PC-3 (cell line): ENCODE measurements at regions of chr11 and their contacts with region 1.

Region 1: GRCh38 chr11:88535916-88536547 is 198.5 kb upstream of the CTSC start:
- DNase-seq: peak; percentile 94
- ATAC-seq: peak; percentile 93
- H3K4me3 ChIP-seq: 0 out of 2 replicates have a peak overlapping the region, but pooled peaks have one; percentile 5
- H3K27ac ChIP-seq: peak overlapping the region; percentile 87
- H3K4me1 ChIP-seq: peaks cover 48% of the 10 kb centered on the region
- H3K27me3 ChIP-seq: no peaks in the 10 kb centered on the region
- CTCF ChIP-seq: no peak

Region 2: GRCh38 chr11:87722756-87723565 is 813.1 kb before region 1 on chr11:
- CTCF ChIA-PET with region 1: interaction called, 12 read pairs
- POLR2A ChIA-PET with region 1: no interaction called
- intact Hi-C with region 1: no loop called
- DNase-seq: peak; percentile 64
- ATAC-seq: peak; percentile 72
- H3K4me3 ChIP-seq: 0 out of 2 replicates have a peak overlapping the region, but pooled peaks have one; percentile 8
- H3K27ac ChIP-seq: no peak overlapping the region
- H3K4me1 ChIP-seq: peaks cover 11% of the 10 kb centered on the region
- H3K27me3 ChIP-seq: no peaks in the 10 kb centered on the region
- CTCF ChIP-seq: peak; percentile 94

Region 3: DNA sequence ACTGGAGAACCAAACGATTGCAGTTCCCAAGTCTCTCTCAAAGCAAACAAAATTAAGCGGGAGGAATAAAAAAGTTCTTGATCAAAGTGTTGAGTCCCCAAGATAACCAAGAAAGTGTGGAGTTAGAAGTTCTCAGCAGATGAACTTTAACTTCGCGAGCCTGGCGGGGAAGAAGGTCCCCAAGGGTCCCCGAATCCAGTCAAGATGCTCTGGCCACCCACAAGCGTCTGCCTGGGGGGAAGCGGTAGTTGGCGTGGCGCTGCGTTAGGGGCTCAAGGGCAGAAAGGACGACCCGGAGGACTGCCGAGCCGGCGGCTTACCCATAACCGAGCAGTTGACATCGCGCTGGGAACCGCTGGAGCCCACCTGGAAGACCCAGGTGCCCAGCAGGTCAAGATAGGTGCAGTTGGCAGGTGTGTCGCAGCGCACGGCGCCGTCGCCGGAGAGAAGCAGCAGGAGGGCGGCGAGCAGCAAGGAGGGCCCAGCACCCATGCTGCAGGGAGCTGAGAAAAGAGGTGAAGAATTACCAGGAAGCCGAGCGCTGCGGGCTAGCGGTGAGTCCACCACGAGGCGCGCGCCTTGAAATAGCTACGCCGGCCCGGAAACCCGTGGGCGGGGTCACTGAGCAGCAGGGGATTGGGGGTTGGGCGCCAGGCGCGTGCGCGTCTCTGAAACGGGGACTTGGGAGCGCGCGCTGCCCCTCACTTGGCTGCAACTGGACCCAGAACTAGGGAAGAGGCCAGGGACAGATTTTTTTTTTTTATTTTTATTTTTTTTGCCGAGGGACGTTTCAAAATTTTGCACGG is 198.6 kb before region 1 on chr11 and contains the start of gene CTSC:
- CTCF ChIA-PET with region 1: interaction called, 3 read pairs
- POLR2A ChIA-PET with region 1: no interaction called
- intact Hi-C with region 1: loop called (anchors 1 kb)
- DNase-seq: peak; percentile 96
- ATAC-seq: peak; percentile 85
- H3K4me3 ChIP-seq: peak within 1 kb of the TSS; percentile 98
- H3K27ac ChIP-seq: peak within 1 kb of the TSS; percentile 78
- H3K4me1 ChIP-seq: peaks cover 48% of the 10 kb centered on the region
- H3K27me3 ChIP-seq: no peaks in the 10 kb centered on the region
- CTCF ChIP-seq: no peak
- total RNA-seq, gene CTSC: 200 and 240 TPM in 2 replicates

Region 4: GRCh38 chr11:88357323-88358039 is 178.6 kb before region 1 on chr11:
- CTCF ChIA-PET with region 1: no interaction called
- POLR2A ChIA-PET with region 1: no interaction called
- intact Hi-C with region 1: loop called (anchors 1 kb)
- DNase-seq: peak; percentile 87
- ATAC-seq: peak; percentile 96
- H3K4me3 ChIP-seq: peak overlapping the region; percentile 15; the same call in 1 of the 2 replicates
- H3K27ac ChIP-seq: peak overlapping the region; percentile 94
- H3K4me1 ChIP-seq: peaks cover 31% of the 10 kb centered on the region
- H3K27me3 ChIP-seq: no peaks in the 10 kb centered on the region
- CTCF ChIP-seq: no peak

Region 5: GRCh38 chr11:88478136-88478815 is 57.8 kb before region 1 on chr11:
- CTCF ChIA-PET with region 1: interaction called, 10 read pairs
- POLR2A ChIA-PET with region 1: no interaction called
- intact Hi-C with region 1: loop called (anchors 2 kb)
- DNase-seq: no peak
- ATAC-seq: no peak
- H3K4me3 ChIP-seq: no peak overlapping the region
- H3K27ac ChIP-seq: no peak overlapping the region
- H3K4me1 ChIP-seq: peaks cover 58% of the 10 kb centered on the region
- H3K27me3 ChIP-seq: no peaks in the 10 kb centered on the region
- CTCF ChIP-seq: no peak

Region 6: DNA sequence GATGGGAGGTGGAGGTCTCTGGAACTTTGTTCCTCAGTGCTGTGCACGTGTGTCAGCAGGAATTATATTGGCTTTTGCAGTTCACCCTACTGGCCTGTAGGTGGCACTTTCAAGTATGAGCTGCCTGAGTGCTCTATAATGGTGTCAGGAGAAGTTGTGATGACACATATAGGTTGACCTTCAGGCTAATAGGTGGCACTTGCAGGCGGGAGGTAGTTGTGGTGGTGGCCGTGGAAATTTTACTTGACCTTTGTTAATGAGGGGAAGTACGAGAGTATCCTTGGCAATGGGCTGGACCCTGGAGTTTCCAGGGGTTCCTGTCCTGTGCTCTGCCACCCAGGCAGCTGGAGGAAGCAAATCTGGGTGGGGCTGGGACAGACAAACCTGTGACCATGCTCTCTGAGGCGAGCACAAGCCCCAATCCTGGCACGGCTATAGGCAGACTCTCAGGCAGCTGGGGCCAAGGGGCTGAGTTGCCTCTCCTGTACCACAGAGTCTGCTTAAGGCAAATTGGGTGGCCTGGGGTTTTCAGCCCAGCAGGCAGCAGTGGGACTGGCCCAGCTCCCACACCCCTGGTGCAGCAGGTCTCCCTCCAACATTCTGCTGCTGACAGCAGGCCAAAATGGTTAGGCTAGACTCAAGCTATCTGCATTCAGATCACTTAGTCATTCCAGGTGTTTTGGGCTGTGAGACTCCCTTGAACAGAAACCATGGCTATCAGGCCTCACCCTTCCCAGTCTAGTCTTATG is 51.0 kb before region 1 on chr11:
- CTCF ChIA-PET with region 1: interaction called, 6 read pairs
- POLR2A ChIA-PET with region 1: no interaction called
- intact Hi-C with region 1: loop called (anchors 2 kb)
- DNase-seq: peak; percentile 83
- ATAC-seq: peak; percentile 4; the same call in 1 of the 2 replicates
- H3K4me3 ChIP-seq: no peak overlapping the region
- H3K27ac ChIP-seq: peak overlapping the region; percentile 35
- H3K4me1 ChIP-seq: peaks cover 86% of the 10 kb centered on the region
- H3K27me3 ChIP-seq: no peaks in the 10 kb centered on the region
- CTCF ChIP-seq: peak; percentile 89